A549 (cell line): ENCODE measurements at regions of chr7 and their contacts with region 1.

Region 1: DNA sequence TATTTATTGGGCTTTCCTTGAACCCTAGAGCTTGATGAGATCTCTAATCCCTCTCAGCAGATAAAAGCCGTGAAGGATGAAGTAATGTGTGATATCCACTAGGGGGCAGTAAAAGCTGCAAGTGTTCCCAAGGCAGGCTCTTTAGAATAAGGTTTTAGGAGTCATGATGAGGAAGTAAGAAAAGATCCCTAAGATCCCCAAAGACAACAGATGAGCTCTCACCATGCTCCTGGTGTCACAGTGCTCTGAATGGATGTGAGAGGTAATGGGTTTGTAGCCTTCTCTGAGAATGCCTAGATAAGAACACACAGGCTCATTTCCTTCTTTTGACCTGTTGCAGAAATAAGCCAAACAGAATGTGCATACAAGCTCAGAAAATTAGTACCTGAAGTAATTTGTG is 70.4 kb upstream of the ITPRID1 start:
- DNase-seq: peak; percentile 60 to 68
- ATAC-seq: peak; percentile 84 to 93
- H3K4me3 ChIP-seq: no peak overlapping the region
- H3K27ac ChIP-seq: no peak overlapping the region
- H3K4me1 ChIP-seq: no peaks in the 10 kb centered on the region
- CTCF ChIP-seq: peak; percentile 90
- EP300 ChIP-seq: no peak
- POLR2A ChIP-seq: no peak
- RAD21 ChIP-seq: peak; percentile 80 to 86

Region 2: DNA sequence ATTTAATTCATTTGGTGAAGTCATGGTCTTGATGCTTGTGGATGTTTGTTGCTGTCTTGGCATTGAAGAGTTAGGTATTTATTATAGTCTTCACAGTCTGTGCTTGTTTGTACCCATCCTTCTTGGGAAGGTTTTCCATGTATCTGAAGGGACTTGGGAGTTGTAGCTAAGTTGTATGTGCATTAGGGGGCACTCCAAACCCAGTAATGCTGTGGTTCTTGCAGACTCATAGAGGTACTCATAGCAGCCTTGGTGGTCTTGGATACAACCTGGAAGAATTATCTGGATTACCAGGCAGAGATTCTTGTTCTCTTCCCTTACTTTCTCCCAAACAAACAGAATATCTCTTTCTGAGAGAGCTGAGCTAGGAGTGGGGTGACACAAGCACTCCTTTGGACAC is 298.1 kb before region 1 on chr7:
- CTCF ChIA-PET with region 1: no interaction called
- POLR2A ChIA-PET with region 1: no interaction called
- DNase-seq: peak in 1 of 2 experiments; percentile 23
- ATAC-seq: no peak
- H3K4me3 ChIP-seq: no peak overlapping the region
- H3K27ac ChIP-seq: no peak overlapping the region
- H3K4me1 ChIP-seq: no peaks in the 10 kb centered on the region
- CTCF ChIP-seq: no peak
- EP300 ChIP-seq: no peak
- POLR2A ChIP-seq: no peak
- RAD21 ChIP-seq: peak in 1 of 2 experiments; percentile 38; a peak in 1 of 5 replicates

Region 3: DNA sequence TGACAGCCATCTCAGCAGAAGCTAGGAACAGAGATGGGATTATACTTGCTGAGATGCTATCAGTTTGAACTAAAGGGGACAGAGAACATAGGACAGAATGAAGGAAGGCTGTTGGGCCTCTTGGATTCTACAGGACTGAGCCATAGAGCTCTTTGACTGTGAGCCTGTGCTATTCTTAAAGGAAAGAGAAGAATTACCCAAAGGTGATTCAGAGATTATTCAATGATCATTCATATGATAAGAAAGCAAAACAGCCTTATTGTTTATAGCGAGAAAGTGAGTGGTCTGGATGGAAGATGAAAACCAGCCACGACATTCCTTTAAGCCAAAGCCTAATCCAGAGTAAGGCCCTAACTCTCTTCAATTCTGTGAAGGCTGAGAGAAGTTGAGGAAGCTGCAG is 33.2 kb before region 1 on chr7:
- CTCF ChIA-PET with region 1: interaction called, 12 read pairs
- POLR2A ChIA-PET with region 1: no interaction called
- DNase-seq: no peak
- ATAC-seq: peak in 1 of 2 experiments; percentile 23; a peak in 2 of 6 replicates
- H3K4me3 ChIP-seq: no peak overlapping the region
- H3K27ac ChIP-seq: peak overlapping the region; percentile 13 to 85; a peak in 4 of 6 replicates
- H3K4me1 ChIP-seq: peaks cover 29% of the 10 kb centered on the region
- CTCF ChIP-seq: no peak
- EP300 ChIP-seq: no peak
- POLR2A ChIP-seq: no peak
- RAD21 ChIP-seq: no peak

Region 4: GRCh38 chr7:31432836-31433340 is 10.6 kb before region 1 on chr7:
- CTCF ChIA-PET with region 1: interaction called, 46 read pairs
- POLR2A ChIA-PET with region 1: no interaction called
- DNase-seq: peak in 1 of 2 experiments; percentile 20
- ATAC-seq: peak in 1 of 2 experiments; percentile 44; a peak in 1 of 6 replicates
- H3K4me3 ChIP-seq: no peak overlapping the region
- H3K27ac ChIP-seq: 0 out of 6 replicates have a peak overlapping the region, but pooled peaks of 1 of the 2 experiments have one; percentile 3
- H3K4me1 ChIP-seq: 0 out of 3 replicates have a peak, but pooled peaks cover 6% of the 10 kb centered on the region
- CTCF ChIP-seq: no peak
- EP300 ChIP-seq: no peak
- POLR2A ChIP-seq: no peak
- RAD21 ChIP-seq: no peak

Region 5: DNA sequence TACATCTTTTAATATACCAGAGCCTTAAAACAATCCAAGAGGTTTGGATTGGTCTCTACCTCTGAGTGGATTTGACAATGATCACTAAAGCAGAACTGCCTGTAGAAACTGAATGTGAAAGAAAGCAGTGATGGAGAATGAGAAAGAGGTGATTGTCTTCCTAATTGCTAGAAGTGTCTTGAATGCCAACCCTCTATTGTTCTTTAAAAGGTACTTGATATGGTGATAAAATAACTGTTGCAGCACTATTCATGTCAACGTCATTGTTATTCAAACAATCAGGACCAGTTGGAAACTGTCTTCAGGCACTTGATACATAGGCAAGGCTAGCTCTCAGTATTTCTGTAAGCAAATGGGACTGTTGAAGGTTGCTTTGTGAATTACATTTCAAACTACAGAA is 22.6 kb after region 1 on chr7:
- CTCF ChIA-PET with region 1: interaction called, 28 read pairs
- POLR2A ChIA-PET with region 1: no interaction called
- DNase-seq: no peak
- ATAC-seq: no peak
- H3K4me3 ChIP-seq: no peak overlapping the region
- H3K27ac ChIP-seq: no peak overlapping the region; a peak in 2 of 6 replicates
- H3K4me1 ChIP-seq: peaks cover 33% of the 10 kb centered on the region
- CTCF ChIP-seq: no peak
- EP300 ChIP-seq: no peak
- POLR2A ChIP-seq: no peak
- RAD21 ChIP-seq: no peak

Region 6: DNA sequence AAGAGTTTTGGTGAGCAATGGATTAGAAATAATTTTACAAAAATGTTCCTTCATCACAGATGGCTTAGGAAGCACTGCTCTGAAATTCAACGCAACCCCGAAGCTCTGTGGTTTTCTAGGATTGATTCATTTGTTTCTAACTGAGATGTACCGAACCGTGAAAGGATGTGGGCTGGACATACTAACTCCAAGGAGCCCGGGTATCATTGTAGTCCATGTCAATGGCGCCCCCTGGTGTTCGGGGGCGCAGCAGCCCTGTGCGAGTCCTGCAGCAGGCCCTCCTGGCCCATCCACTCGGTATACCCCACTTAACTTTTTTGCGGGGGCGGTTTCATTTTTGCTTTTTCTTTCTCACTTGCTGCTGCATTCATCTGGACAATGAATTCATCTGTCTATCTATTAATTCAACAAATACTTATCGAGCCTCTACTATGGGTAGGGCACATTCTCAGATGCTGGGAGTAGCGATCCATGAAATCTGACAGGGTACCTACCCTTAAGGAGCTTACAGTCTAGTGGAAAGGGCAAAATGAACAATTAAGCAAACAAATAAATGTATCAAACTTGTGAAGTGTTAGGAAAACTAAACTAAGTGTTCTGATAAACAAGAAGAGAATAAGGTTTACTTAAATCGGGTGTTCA is 45.2 kb after region 1 on chr7:
- CTCF ChIA-PET with region 1: interaction called, 109 read pairs
- POLR2A ChIA-PET with region 1: no interaction called
- DNase-seq: peak; percentile 65 to 69
- ATAC-seq: peak; percentile 98 to 100
- H3K4me3 ChIP-seq: no peak overlapping the region
- H3K27ac ChIP-seq: no peak overlapping the region
- H3K4me1 ChIP-seq: no peaks in the 10 kb centered on the region
- CTCF ChIP-seq: peak; percentile 83
- EP300 ChIP-seq: no peak
- POLR2A ChIP-seq: no peak
- RAD21 ChIP-seq: peak; percentile 89 to 92

Region 7: GRCh38 chr7:31633894-31634494 is 190.5 kb after region 1 on chr7:
- CTCF ChIA-PET with region 1: interaction called, 52 read pairs
- POLR2A ChIA-PET with region 1: no interaction called
- DNase-seq: peak; percentile 47 to 69
- ATAC-seq: peak; percentile 96
- H3K4me3 ChIP-seq: no peak overlapping the region
- H3K27ac ChIP-seq: no peak overlapping the region
- H3K4me1 ChIP-seq: no peaks in the 10 kb centered on the region
- CTCF ChIP-seq: peak; percentile 76
- EP300 ChIP-seq: no peak
- POLR2A ChIP-seq: no peak
- RAD21 ChIP-seq: peak; percentile 87 to 92

Region 8: DNA sequence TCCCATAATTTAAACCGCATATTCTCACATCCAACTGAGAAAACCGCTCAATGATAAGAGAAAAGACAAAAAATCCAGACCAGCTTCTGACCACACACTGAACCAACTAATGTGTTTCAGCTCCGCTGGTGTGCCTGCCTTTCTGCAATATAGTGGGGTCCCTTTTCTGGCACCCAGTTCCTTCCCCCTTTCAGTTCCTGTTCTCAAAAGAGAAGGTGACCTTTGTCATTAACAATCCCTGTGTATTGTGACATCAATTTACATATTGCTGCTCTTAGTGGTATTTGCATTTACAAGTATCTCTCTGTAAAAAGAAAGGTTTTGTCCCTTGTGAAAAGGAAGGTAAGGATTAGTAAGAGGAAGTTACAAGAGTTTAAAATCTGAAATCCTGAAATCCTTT is 244.9 kb after region 1 on chr7:
- CTCF ChIA-PET with region 1: no interaction called
- POLR2A ChIA-PET with region 1: no interaction called
- DNase-seq: no peak
- ATAC-seq: no peak
- H3K4me3 ChIP-seq: no peak overlapping the region
- H3K27ac ChIP-seq: no peak overlapping the region
- H3K4me1 ChIP-seq: no peaks in the 10 kb centered on the region
- CTCF ChIP-seq: no peak
- EP300 ChIP-seq: no peak
- POLR2A ChIP-seq: no peak
- RAD21 ChIP-seq: no peak